PC-3 (cell line): ENCODE measurements at regions of chr5 and their contacts with region 1.

Region 1: DNA sequence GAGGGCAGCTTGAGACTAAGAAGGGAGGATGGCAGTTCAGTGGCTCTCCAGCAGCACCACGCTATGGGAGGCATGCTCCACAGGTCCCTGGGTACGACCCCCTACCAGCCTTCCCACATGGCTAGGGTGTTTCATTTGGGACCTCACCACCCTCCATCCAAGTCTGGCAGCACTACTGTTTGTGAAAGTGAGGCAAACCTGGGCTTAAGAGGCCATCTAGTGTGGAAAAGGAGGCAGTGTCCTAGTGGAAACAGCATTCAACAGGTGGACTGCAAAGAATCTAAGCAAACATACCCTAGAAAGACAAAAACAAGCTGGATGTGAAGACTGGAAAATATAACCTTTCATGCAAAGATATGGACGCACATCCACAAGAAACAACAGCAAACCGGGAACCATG is 4.8 kb upstream of the C5orf47 start:
- DNase-seq: peak; percentile 76
- ATAC-seq: peak; percentile 97
- H3K4me3 ChIP-seq: no peak overlapping the region
- H3K27ac ChIP-seq: no peak overlapping the region
- H3K4me1 ChIP-seq: no peaks in the 10 kb centered on the region
- H3K27me3 ChIP-seq: no peaks in the 10 kb centered on the region
- CTCF ChIP-seq: peak; percentile 94

Region 2: DNA sequence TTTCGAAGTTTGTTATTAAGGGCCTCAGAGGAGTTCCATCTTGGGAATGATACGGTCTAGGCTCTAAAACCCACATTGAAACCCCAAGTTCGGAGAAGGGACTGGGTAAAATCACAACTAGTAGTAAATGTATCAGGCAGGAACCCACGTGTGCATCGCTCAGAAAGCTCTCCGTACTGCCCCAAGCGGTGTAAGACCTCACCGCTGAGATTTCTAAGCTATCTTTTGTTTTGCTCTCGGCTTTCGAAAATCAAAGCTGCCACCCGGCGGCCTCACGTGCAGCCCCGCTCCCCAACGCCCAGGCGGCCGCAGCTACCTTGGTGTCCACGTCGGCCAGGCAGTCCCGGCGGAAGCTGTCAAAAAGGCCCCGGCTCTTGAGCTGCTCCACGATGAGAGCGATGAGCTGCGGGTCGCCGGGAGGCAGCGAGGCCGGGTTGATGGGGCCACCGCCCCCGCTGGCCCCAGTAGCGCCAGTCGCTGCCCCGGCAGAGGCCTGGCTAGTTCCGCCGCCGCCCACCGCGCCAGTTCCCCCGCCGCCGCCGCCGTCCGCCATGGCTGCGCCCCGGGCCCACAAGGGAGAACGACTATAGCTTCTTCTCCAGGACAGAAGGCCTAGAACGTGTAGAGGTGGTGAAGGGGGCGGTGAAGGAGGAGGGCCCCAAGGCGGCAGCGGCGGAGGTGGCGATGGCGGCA is 368.2 kb before region 1 on chr5:
- CTCF ChIA-PET with region 1: interaction called, 10 read pairs
- POLR2A ChIA-PET with region 1: interaction called, 7 read pairs
- intact Hi-C with region 1: loop called (anchors 1 kb)
- DNase-seq: peak; percentile 79
- ATAC-seq: peak; percentile 62
- H3K4me3 ChIP-seq: peak overlapping the region; percentile 90
- H3K27ac ChIP-seq: peak overlapping the region; percentile 71
- H3K4me1 ChIP-seq: peaks cover 36% of the 10 kb centered on the region
- H3K27me3 ChIP-seq: no peaks in the 10 kb centered on the region
- CTCF ChIP-seq: peak; percentile 81

Region 3: GRCh38 chr5:173808134-173808808 is 175.9 kb before region 1 on chr5:
- CTCF ChIA-PET with region 1: no interaction called
- POLR2A ChIA-PET with region 1: no interaction called
- intact Hi-C with region 1: no loop called
- DNase-seq: no peak
- ATAC-seq: no peak
- H3K4me3 ChIP-seq: no peak overlapping the region
- H3K27ac ChIP-seq: no peak overlapping the region
- H3K4me1 ChIP-seq: no peaks in the 10 kb centered on the region
- H3K27me3 ChIP-seq: no peaks in the 10 kb centered on the region
- CTCF ChIP-seq: no peak

Region 4: GRCh38 chr5:173925448-173926071 is 58.7 kb before region 1 on chr5:
- CTCF ChIA-PET with region 1: no interaction called
- POLR2A ChIA-PET with region 1: no interaction called
- intact Hi-C with region 1: no loop called
- DNase-seq: peak; percentile 72
- ATAC-seq: peak; percentile 23
- H3K4me3 ChIP-seq: no peak overlapping the region
- H3K27ac ChIP-seq: peak overlapping the region; percentile 27
- H3K4me1 ChIP-seq: peaks cover 29% of the 10 kb centered on the region
- H3K27me3 ChIP-seq: no peaks in the 10 kb centered on the region
- CTCF ChIP-seq: peak; percentile 82